ENCODE measurements at regions of chr14 and their contacts with region 1.

Region 1: DNA sequence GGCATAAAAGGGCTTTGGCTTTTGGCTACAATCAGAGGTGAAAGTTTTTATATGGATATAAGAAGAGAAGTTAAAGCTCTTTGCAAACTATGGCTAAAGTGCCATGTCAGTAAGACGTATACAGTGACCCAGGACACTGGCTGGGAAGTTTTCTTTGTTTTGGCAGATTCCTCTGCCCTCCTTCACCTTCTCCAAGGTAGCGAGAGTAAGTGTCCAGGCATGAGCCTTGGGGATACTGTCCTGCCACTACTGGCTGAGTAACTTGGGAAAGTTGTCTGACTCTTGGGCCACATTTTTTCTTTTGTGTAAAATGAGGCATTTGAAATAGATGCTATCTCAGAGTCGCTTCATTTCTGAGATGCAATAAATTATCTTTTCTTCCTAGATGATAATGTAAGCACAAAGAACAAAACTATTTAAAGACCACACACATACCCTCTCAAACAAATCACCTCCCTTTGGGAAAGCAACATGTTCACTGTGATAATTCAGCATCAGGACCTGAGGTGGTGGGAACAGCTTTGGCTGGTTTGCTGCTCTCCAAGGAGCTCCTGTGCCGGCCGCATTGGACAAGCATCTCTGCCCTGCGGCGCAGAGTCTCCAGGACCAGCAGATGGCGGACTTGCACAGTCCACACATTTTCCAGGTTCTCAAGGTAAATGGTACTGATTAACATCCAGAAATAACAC is 106.3 kb downstream of the PTCSC3 start:
- DNase-seq: peak; percentile 47
- H3K4me3 ChIP-seq: no peak overlapping the region
- H3K27ac ChIP-seq: no peak overlapping the region
- H3K4me1 ChIP-seq: no peaks in the 10 kb centered on the region
- H3K27me3 ChIP-seq: peaks cover 0 to 2% of the 10 kb centered on the region in 2 experiments
- CTCF ChIP-seq: peak; percentile 69 to 79
- POLR2A ChIP-seq: no peak

Region 2: DNA sequence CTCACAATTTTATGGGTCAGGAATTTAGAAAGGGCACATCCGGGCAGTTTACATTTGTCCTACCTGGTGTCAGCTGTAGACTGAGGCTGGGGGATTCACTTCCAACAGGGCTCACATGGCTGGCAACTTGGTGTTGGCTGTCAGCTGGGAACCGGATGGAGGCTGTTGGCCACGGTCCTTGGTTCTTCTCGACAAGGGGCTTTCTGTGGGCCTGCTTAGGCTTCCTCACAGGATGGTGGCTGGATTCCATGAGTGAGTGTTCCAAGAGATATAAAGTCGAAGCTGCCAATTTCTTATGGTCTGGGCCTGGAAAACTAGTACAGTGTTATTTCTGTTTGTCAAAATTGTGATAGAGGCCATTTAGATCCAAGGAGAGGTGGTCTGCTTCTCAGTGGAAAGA is 21.5 kb before region 1 on chr14:
- CTCF ChIA-PET with region 1: interaction called, 14 read pairs
- POLR2A ChIA-PET with region 1: no interaction called
- dilution Hi-C with region 1: no loop called
- intact Hi-C with region 1: no loop called
- DNase-seq: no peak
- H3K4me3 ChIP-seq: no peak overlapping the region
- H3K27ac ChIP-seq: no peak overlapping the region
- H3K4me1 ChIP-seq: no peaks in the 10 kb centered on the region
- H3K27me3 ChIP-seq: peaks cover 0 to 2% of the 10 kb centered on the region in 2 experiments
- CTCF ChIP-seq: no peak
- POLR2A ChIP-seq: no peak

Region 3: GRCh38 chr14:36091096-36091495 is 20.9 kb after region 1 on chr14:
- CTCF ChIA-PET with region 1: interaction called, 12 read pairs
- POLR2A ChIA-PET with region 1: no interaction called
- dilution Hi-C with region 1: no loop called
- intact Hi-C with region 1: no loop called
- DNase-seq: no peak
- H3K4me3 ChIP-seq: no peak overlapping the region
- H3K27ac ChIP-seq: no peak overlapping the region
- H3K4me1 ChIP-seq: no peaks in the 10 kb centered on the region
- H3K27me3 ChIP-seq: no peaks in the 10 kb centered on the region
- CTCF ChIP-seq: no peak
- POLR2A ChIP-seq: no peak

Region 4: GRCh38 chr14:36373982-36374673 is 304.0 kb after region 1 on chr14:
- CTCF ChIA-PET with region 1: interaction called, 178 read pairs
- POLR2A ChIA-PET with region 1: no interaction called
- dilution Hi-C with region 1: no loop called
- intact Hi-C with region 1: loop called (anchors 1 kb)
- DNase-seq: peak; percentile 74
- H3K4me3 ChIP-seq: no peak overlapping the region
- H3K27ac ChIP-seq: no peak overlapping the region
- H3K4me1 ChIP-seq: no peaks in the 10 kb centered on the region
- H3K27me3 ChIP-seq: no peaks in the 10 kb centered on the region
- CTCF ChIP-seq: peak; percentile 74 to 82
- POLR2A ChIP-seq: no peak

Region 5: DNA sequence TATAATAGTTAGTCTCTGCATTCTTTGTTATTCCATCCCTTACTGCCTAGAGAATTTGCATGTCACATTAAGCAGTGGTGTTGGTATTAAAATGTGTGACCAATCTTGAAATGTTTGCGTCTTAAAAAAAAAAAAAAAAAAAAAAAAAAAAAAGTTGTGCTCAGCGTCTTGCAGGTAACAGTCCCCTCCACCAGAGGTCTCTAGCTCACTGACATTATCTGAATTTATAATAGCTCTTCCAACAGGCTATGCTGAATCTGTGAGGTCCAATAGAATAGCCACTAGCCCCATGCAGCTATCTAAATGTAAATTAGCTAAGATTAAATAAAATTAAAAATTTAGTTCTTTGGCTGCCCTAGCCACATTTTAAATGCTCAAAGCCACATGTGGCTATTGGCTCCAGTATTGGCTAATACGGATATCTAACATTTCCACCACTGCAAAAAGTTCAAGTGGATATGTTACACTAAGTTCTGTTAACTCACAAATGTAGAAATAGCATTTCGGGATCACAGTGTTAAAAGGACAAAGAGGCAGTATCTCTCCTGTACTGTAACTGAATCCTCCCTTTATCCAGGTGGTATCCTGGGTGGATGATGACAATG is 483.6 kb after region 1 on chr14:
- CTCF ChIA-PET with region 1: interaction called, 48 read pairs
- POLR2A ChIA-PET with region 1: no interaction called
- dilution Hi-C with region 1: no loop called
- intact Hi-C with region 1: loop called (anchors 1 kb)
- DNase-seq: peak; percentile 49
- H3K4me3 ChIP-seq: no peak overlapping the region
- H3K27ac ChIP-seq: no peak overlapping the region
- H3K4me1 ChIP-seq: no peaks in the 10 kb centered on the region
- H3K27me3 ChIP-seq: peaks cover 3 to 6% of the 10 kb centered on the region in 2 experiments
- CTCF ChIP-seq: peak; percentile 56 to 61
- POLR2A ChIP-seq: no peak

Measured in endothelial cell of umbilical vein (primary cell).